Naive thymus-derived CD4-positive, alpha-beta T cell (primary cell): ENCODE measurements at regions of chr17 and their contacts with region 1.

Region 1: GRCh38 chr17:76452660-76453430 is at the start of gene UBE2O:
- DNase-seq: peak; percentile 92 to 97 (median 95)
- ATAC-seq: peak; percentile 97
- H3K4me3 ChIP-seq: peak within 1 kb of the TSS; percentile 73
- H3K4me3 Mint-ChIP-seq: peak within 1 kb of the TSS; percentile 86 to 95 (median 88)
- H3K27ac ChIP-seq: peak within 1 kb of the TSS; percentile 89
- H3K27ac Mint-ChIP-seq: peak within 1 kb of the TSS; percentile 81 to 98 (median 93)
- H3K4me1 ChIP-seq: peaks cover 11 to 23% of the 10 kb centered on the region in 2 donors
- H3K4me1 Mint-ChIP-seq: peaks cover 17 to 46% (median 42%) of the 10 kb centered on the region in 7 donors
- H3K27me3 ChIP-seq: no peaks in the 10 kb centered on the region
- H3K27me3 Mint-ChIP-seq: no peaks in the 10 kb centered on the region
- total RNA-seq, gene UBE2O: 32.6 to 50.8 (median 41.6) TPM

Region 2: GRCh38 chr17:75904749-75905521 is 547.9 kb before region 1 on chr17 and contains the start of gene MRPL38:
- CTCF ChIA-PET with region 1: no interaction called
- POLR2A ChIA-PET with region 1: no interaction called
- intact Hi-C with region 1: loop called in 1 of 2 experiments (anchors 1 kb)
- DNase-seq: peak; percentile 88 to 97 (median 91)
- ATAC-seq: peak; percentile 99
- H3K4me3 ChIP-seq: peak within 1 kb of the TSS; percentile 72
- H3K4me3 Mint-ChIP-seq: peak within 1 kb of the TSS; percentile 83 to 97 (median 92)
- H3K27ac ChIP-seq: peak within 1 kb of the TSS; percentile 85
- H3K27ac Mint-ChIP-seq: peak within 1 kb of the TSS; percentile 90 to 97 (median 95)
- H3K4me1 ChIP-seq: peaks cover 0 to 5% of the 10 kb centered on the region in 2 donors
- H3K4me1 Mint-ChIP-seq: peaks cover 2 to 16% (median 14%) of the 10 kb centered on the region in 7 donors
- H3K27me3 ChIP-seq: no peaks in the 10 kb centered on the region
- H3K27me3 Mint-ChIP-seq: no peaks in the 10 kb centered on the region
- total RNA-seq, gene MRPL38: 81.0 to 154 (median 128) TPM

Region 3: DNA sequence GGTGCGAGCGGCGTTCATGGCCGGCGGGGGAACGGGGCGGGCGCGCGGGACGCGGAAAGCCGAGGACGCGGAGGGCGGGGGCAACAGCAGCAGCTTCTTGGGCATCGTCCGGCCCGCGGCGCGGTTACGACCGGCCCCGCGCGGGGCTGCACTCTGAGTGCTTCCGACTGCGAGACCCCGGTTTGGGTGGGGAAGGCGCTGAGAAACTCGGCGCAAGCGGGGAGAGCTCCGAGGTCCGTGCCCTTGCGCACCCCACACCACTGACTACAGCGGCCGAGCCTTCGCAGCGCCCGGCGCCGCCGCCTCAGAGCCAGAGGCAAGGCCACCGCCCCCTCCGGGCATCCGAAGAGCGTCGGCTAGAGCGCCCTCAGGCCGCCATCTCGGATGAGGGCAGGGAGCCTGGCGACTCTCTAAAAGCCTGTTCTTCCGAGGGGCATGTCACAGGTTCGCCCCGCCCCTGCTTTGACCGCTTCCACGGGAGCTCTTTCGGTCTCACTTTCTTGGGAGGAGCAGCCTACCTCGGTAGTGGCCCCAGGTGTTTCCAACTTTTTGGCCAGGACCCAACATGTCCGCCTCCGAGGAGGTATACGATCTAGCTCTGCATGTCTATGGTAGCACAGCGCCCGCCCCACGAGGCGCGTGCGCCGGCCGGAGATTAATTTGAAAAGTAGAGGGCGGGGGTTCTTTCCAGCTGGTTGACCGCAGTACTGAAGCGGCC is 99.1 kb before region 1 on chr17 and contains the start of gene PRPSAP1:
- CTCF ChIA-PET with region 1: no interaction called
- POLR2A ChIA-PET with region 1: no interaction called
- intact Hi-C with region 1: loop called (anchors 1 to 5 kb)
- DNase-seq: peak; percentile 76 to 89 (median 82)
- ATAC-seq: peak; percentile 98
- H3K4me3 ChIP-seq: peak within 1 kb of the TSS; percentile 97
- H3K4me3 Mint-ChIP-seq: peak within 1 kb of the TSS; percentile 89 to 99 (median 94)
- H3K27ac ChIP-seq: peak within 1 kb of the TSS; percentile 81
- H3K27ac Mint-ChIP-seq: peak within 1 kb of the TSS; percentile 91 to 100 (median 96)
- H3K4me1 ChIP-seq: no peaks in the 10 kb centered on the region
- H3K4me1 Mint-ChIP-seq: peaks cover 13 to 35% (median 19%) of the 10 kb centered on the region in 7 donors
- H3K27me3 ChIP-seq: no peaks in the 10 kb centered on the region
- H3K27me3 Mint-ChIP-seq: no peaks in the 10 kb centered on the region
- total RNA-seq, gene PRPSAP1: 19.6 to 55.9 (median 45.8) TPM

Region 4: DNA sequence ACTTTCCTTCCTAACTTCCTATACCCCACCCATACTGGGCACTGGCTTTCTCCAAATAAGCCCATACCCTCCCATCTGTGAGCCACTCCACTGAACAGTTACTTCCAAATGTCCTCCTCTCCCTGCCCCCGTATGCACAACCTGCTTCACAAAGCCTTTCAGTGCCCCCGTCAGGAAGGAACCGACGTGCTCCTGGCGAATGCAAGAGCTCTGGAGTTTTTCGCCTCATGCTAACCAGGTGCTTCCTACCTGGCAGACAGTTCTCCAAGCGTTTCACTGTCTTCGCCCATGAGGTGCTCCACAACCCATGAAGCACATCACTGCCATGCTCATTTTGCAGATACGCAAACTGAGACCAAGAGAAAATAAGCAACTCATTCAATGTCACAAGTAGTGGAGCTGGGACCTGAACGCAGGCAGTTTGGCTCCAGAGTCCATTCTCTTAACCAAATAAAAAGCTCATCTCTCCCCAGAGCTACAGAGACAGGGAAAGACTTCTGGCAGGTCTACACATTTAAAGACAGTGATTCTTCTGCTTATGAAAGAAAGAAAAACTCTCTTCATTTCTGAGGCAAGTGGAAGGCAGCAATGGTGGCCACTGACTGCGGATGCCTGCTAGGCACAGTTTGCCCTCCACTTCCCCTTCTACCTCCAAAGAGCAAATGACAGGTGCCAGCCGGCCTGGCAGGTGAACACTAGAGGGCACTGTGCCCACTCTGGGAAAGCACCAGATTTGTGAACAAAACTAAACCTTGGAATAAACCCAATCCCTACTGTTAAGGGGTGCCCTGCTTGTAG is 44.6 kb before region 1 on chr17:
- CTCF ChIA-PET with region 1: interaction called, 3 read pairs
- POLR2A ChIA-PET with region 1: no interaction called
- intact Hi-C with region 1: loop called (anchors 2 kb)
- DNase-seq: peak; percentile 48 to 72 (median 65)
- ATAC-seq: peak; percentile 89
- H3K4me3 ChIP-seq: no peak overlapping the region
- H3K4me3 Mint-ChIP-seq: no peak overlapping the region
- H3K27ac ChIP-seq: no peak overlapping the region
- H3K27ac Mint-ChIP-seq: peak overlapping the region in 6 of 9 donors; percentile 25 to 75 (median 61)
- H3K4me1 ChIP-seq: no peaks in the 10 kb centered on the region
- H3K4me1 Mint-ChIP-seq: peaks cover 9 to 14% (median 11%) of the 10 kb centered on the region in 7 donors
- H3K27me3 ChIP-seq: no peaks in the 10 kb centered on the region
- H3K27me3 Mint-ChIP-seq: no peaks in the 10 kb centered on the region

Region 5: GRCh38 chr17:76501018-76501826 is 48.4 kb after region 1 on chr17 and contains the start of gene RHBDF2:
- CTCF ChIA-PET with region 1: interaction called, 5 read pairs
- POLR2A ChIA-PET with region 1: interaction called, 8 read pairs
- intact Hi-C with region 1: loop called (anchors 1 kb)
- DNase-seq: peak; percentile 90 to 100 (median 95)
- ATAC-seq: peak; percentile 99
- H3K4me3 ChIP-seq: peak within 1 kb of the TSS; percentile 62
- H3K4me3 Mint-ChIP-seq: peak within 1 kb of the TSS; percentile 82 to 91 (median 86)
- H3K27ac ChIP-seq: peak within 1 kb of the TSS; percentile 73
- H3K27ac Mint-ChIP-seq: peak within 1 kb of the TSS; percentile 95 to 99 (median 97)
- H3K4me1 ChIP-seq: peaks cover 22 to 44% of the 10 kb centered on the region in 2 donors
- H3K4me1 Mint-ChIP-seq: peaks cover 17 to 61% (median 35%) of the 10 kb centered on the region in 7 donors
- H3K27me3 ChIP-seq: no peaks in the 10 kb centered on the region
- H3K27me3 Mint-ChIP-seq: no peaks in the 10 kb centered on the region
- total RNA-seq, gene RHBDF2: 31.1 to 119 (median 35.4) TPM

Region 6: GRCh38 chr17:76515274-76515949 is 62.6 kb after region 1 on chr17:
- CTCF ChIA-PET with region 1: no interaction called
- POLR2A ChIA-PET with region 1: interaction called, 5 read pairs
- intact Hi-C with region 1: loop called in 1 of 2 experiments (anchors 5 kb)
- DNase-seq: peak; percentile 62 to 94 (median 90)
- ATAC-seq: peak; percentile 90
- H3K4me3 ChIP-seq: peak overlapping the region; percentile 12
- H3K4me3 Mint-ChIP-seq: peak overlapping the region; percentile 75 to 89 (median 82)
- H3K27ac ChIP-seq: peak overlapping the region; percentile 96
- H3K27ac Mint-ChIP-seq: peak overlapping the region; percentile 95 to 100 (median 99)
- H3K4me1 ChIP-seq: peaks cover 36 to 58% of the 10 kb centered on the region in 2 donors
- H3K4me1 Mint-ChIP-seq: peaks cover 25 to 67% (median 37%) of the 10 kb centered on the region in 7 donors
- H3K27me3 ChIP-seq: no peaks in the 10 kb centered on the region
- H3K27me3 Mint-ChIP-seq: peaks cover 0 to 5% (median 0%) of the 10 kb centered on the region in 5 donors

Region 7: DNA sequence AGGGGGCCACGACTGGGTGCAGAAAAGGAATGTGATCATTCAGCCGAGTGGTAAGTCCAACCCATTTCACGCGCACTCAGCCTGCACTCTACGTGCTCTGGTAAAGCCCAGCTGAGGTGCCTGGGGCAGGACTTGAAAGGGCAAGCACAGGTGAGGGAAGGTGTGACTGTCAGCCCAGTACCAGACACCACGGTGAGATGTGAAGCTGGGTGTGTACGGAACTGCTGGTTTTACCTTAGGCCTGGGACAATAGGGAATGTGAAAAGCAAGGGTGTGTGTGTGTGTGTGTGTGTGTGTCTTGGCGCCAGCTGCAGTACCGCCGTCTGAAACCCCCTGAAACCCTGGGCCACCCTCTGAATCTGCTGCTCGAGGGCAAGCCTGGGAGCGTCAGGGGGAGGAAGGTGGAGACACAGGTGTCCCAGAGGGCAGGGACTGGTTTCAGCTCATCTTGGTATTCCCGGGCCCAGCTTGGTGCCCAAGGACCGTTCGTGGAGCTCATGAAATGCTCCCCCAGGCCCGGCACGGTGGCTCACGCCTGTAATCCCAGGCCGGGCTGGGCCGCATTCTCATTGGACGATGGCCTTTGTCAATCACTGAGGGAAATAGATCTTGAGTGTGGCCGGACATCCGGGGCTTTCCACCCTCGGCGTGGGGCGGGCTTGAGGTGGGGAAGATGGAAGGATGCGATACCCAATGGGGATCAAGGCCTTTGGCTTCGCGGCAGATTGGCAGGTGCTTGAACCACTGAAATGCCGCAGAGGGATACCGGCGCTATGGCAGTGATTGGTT is 218.5 kb after region 1 on chr17:
- CTCF ChIA-PET with region 1: no interaction called
- POLR2A ChIA-PET with region 1: interaction called, 4 read pairs
- intact Hi-C with region 1: loop called (anchors 1 to 10 kb)
- DNase-seq: peak; percentile 90 to 99 (median 98)
- ATAC-seq: peak; percentile 99
- H3K4me3 ChIP-seq: peak overlapping the region; percentile 76
- H3K4me3 Mint-ChIP-seq: peak overlapping the region; percentile 81 to 98 (median 92)
- H3K27ac ChIP-seq: peak overlapping the region; percentile 84
- H3K27ac Mint-ChIP-seq: peak overlapping the region; percentile 88 to 99 (median 96)
- H3K4me1 ChIP-seq: peaks cover 19 to 26% of the 10 kb centered on the region in 2 donors
- H3K4me1 Mint-ChIP-seq: peaks cover 20 to 43% (median 31%) of the 10 kb centered on the region in 7 donors
- H3K27me3 ChIP-seq: no peaks in the 10 kb centered on the region
- H3K27me3 Mint-ChIP-seq: peaks cover 0 to 10% (median 0%) of the 10 kb centered on the region in 5 donors